GM12878 (cell line): ENCODE measurements at regions of chr14 and their contacts with region 1.

Region 1: DNA sequence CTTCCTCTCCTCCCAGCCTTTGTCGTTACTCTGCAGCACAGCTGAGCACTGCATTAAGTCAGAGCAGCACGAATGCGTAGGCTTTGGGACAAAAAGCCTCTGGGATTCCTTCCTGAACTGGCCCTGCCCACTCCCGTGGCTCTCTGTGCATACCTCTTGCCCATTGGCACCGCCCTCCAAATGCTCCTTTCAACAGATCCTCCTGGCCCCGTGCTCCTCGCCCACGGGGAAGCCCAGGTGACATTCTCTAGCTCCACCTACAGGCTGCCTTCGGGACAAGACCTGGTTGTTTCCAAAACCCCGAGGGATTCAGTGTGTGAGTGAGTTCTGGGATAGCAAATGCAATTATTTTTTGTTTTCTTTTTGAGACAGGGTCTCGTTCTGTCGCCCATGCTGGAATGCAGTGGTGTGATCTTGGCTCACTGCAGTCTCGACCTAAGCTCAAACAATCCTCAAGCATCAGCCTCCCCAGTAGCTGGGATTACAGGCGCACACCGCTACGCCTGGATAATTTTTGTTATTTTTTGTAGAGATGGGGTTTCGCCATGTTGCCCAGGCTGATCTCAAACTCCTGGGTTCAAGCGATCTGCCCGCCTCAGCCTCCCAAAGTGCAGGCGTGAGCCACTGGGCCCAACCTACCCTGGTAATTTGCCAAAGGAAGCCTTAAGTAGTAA is 17.9 kb upstream of the TDRD9 start:
- DNase-seq: peak; percentile 9
- ATAC-seq: peak; percentile 89
- H3K4me3 ChIP-seq: no peak overlapping the region
- H3K27ac ChIP-seq: no peak overlapping the region
- H3K4me1 ChIP-seq: no peaks in the 10 kb centered on the region
- H3K27me3 ChIP-seq: no peaks in the 10 kb centered on the region
- CTCF ChIP-seq: peak; percentile 69 to 80 (median 74)
- EP300 ChIP-seq: no peak
- POLR2A ChIP-seq: peak; percentile 34; the same call in 1 of the 2 replicates
- RAD21 ChIP-seq: peak; percentile 84

Region 2: DNA sequence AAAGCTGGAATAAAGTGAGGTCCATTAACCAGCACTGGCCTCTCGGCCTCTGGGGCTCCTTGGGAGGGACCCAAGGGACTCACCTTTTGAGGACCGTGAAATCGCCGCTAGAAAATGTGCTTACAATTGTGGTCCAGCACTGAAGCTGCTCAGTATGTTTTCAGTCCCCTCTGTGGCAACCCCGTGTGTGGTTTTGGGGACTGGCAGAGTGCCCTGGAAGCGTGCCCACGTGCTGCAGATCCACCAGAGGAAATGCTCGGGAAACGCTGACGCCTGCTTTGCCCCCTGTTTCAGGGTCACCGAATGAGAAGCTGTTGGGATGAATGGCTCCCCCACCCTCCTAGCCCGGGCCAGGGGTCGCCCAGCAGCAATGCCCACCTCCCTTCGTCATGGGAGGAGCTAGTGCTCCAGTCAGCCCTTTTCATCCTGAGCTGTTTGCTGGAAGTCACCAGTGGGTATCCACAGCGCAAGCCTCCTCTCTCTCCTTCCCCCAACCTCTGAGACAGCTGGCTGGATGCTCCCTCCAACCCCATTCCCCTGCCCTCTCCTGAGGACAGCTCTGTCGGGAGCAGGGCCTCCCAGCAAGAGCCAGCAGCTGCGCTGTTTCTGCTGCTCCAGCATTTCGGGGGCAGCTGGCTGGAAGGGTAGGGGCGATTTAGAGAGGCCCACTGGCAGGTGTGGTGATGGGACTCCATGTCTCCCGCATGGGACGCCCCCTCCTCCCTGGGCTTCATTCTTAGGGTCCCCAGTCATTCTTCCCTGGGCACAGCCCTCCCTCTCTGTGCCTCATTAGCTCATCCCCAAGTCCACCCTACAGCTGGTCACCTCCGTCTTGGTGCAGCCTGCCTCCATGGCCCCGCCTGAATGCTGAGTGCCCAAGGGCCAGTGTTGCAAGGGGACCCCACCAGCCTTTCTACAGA is 29.8 kb before region 1 on chr14:
- CTCF ChIA-PET with region 1: no interaction called
- POLR2A ChIA-PET with region 1: no interaction called
- RAD21 ChIA-PET with region 1: no interaction called
- SMC1A ChIA-PET with region 1: no interaction called
- in situ Hi-C with region 1: no loop called
- intact Hi-C with region 1: no loop called
- DNase-seq: no peak
- ATAC-seq: no peak
- H3K4me3 ChIP-seq: no peak overlapping the region
- H3K27ac ChIP-seq: no peak overlapping the region
- H3K4me1 ChIP-seq: no peaks in the 10 kb centered on the region
- H3K27me3 ChIP-seq: peaks cover 0 to 3% of the 10 kb centered on the region in 2 experiments; a peak in 2 of 4 replicates
- CTCF ChIP-seq: no peak
- EP300 ChIP-seq: no peak
- POLR2A ChIP-seq: no peak
- RAD21 ChIP-seq: no peak

Region 3: DNA sequence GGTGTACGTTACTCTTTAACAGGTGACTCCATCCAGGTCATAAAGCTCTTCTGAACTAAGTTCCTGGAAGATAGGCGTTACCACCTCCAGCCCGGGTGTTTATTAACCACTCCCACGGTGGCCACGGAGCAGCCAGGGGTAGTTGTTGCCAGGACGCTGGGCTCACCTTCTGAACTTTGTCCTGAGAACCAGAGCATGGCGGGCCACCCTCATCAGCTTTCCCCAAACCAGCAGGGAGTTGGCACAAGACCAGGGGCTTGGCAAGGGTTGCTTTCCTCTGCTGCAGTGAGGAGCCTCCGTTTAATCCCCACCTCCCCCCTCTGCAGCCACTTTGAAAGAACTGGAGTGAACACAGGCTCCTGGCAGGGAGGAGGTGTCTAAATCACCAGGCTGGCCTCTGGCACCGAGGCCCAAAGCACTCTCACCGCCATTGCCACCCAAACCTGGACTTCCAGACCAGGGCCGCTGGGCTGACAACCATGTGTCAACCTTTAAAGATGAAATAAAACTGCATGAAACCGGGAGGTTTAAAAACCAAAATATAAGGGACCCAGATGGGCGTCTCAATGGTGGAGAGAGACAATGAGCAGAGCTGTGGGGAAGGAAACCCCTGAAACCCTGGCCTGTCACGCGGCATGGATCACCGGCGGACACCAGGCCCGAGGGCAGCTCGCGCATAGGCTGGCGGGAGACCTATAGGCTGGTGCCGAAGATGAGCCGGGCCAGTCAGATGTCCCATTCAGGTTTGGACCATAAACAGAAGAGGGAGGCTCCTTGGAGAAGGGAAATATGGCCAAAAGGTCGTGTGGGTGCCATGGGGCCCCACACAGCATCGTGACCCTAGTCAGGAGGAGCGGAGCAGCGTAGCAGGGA is 13.1 kb before region 1 on chr14:
- CTCF ChIA-PET with region 1: interaction called, 15 read pairs
- POLR2A ChIA-PET with region 1: no interaction called
- RAD21 ChIA-PET with region 1: interaction called, 3 read pairs
- SMC1A ChIA-PET with region 1: interaction called, 3 read pairs
- in situ Hi-C with region 1: no loop called
- intact Hi-C with region 1: no loop called
- DNase-seq: no peak
- ATAC-seq: no peak
- H3K4me3 ChIP-seq: no peak overlapping the region
- H3K27ac ChIP-seq: no peak overlapping the region
- H3K4me1 ChIP-seq: no peaks in the 10 kb centered on the region
- H3K27me3 ChIP-seq: no peaks in the 10 kb centered on the region
- CTCF ChIP-seq: no peak
- EP300 ChIP-seq: no peak
- POLR2A ChIP-seq: no peak
- RAD21 ChIP-seq: no peak

Region 4: GRCh38 chr14:103920981-103921854 is 10.8 kb after region 1 on chr14:
- CTCF ChIA-PET with region 1: interaction called, 14 read pairs
- POLR2A ChIA-PET with region 1: interaction called, 3 read pairs
- RAD21 ChIA-PET with region 1: no interaction called
- SMC1A ChIA-PET with region 1: interaction called, 5 read pairs
- in situ Hi-C with region 1: no loop called
- intact Hi-C with region 1: no loop called
- DNase-seq: peak; percentile 71
- ATAC-seq: peak; percentile 100
- H3K4me3 ChIP-seq: peak overlapping the region; percentile 93
- H3K27ac ChIP-seq: peak overlapping the region; percentile 62
- H3K4me1 ChIP-seq: no peaks in the 10 kb centered on the region
- H3K27me3 ChIP-seq: no peaks in the 10 kb centered on the region
- CTCF ChIP-seq: peak; percentile 98 to 99 (median 99); a peak in 5 of 6 replicates
- EP300 ChIP-seq: no peak
- POLR2A ChIP-seq: peak; percentile 95
- RAD21 ChIP-seq: 0 out of 2 replicates have a peak, but pooled peaks have one; percentile 28